ENCODE measurements at regions of chr15 and their contacts with region 1.

Region 1: DNA sequence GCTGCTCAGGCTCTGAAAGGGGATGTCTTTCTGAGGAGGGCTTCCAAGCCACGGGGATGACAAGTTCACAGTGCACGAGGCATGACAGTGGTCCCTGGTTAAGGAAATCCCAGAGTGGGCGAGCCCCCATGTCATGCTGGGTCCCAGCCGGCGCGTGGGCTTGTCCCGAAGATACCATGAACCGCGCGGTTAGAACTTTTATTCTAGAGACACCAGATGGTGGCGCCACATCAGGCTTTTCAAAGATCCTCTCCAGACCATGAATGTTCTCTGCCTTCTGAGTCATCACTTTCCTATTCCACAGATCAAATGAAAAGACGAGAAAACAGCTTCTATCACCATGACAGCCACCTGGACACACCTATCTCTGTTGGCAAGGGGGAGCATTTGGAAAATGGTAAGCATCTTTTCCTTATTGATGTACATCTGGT is 227.8 kb upstream of the LYSMD4 start:
- DNase-seq: peak; percentile 43 to 46
- H3K4me3 ChIP-seq: no peak overlapping the region
- H3K27ac ChIP-seq: no peak overlapping the region
- H3K4me1 ChIP-seq: no peaks in the 10 kb centered on the region; the same call in 1 of the 2 replicates
- H3K27me3 ChIP-seq: no peaks in the 10 kb centered on the region
- CTCF ChIP-seq: peak; percentile 57

Region 2: GRCh38 chr15:99928429-99928981 is 32.5 kb before region 1 on chr15:
- CTCF ChIA-PET with region 1: no interaction called
- POLR2A ChIA-PET with region 1: no interaction called
- intact Hi-C with region 1: no loop called
- DNase-seq: peak; percentile 47 to 83
- H3K4me3 ChIP-seq: peak overlapping the region; percentile 69
- H3K27ac ChIP-seq: peak overlapping the region; percentile 40; the same call in 1 of the 2 replicates
- H3K4me1 ChIP-seq: peaks cover 8% of the 10 kb centered on the region
- H3K27me3 ChIP-seq: peaks cover 13% of the 10 kb centered on the region; the same call in 1 of the 2 replicates
- CTCF ChIP-seq: peak; percentile 68

Region 3: GRCh38 chr15:100131321-100132224 is 170.5 kb after region 1 on chr15:
- CTCF ChIA-PET with region 1: no interaction called
- POLR2A ChIA-PET with region 1: no interaction called
- intact Hi-C with region 1: loop called (anchors 2 kb)
- DNase-seq: peak in 1 of 2 experiments; percentile 45
- H3K4me3 ChIP-seq: peak overlapping the region; percentile 36; the same call in 1 of the 2 replicates
- H3K27ac ChIP-seq: no peak overlapping the region
- H3K4me1 ChIP-seq: no peaks in the 10 kb centered on the region
- H3K27me3 ChIP-seq: no peaks in the 10 kb centered on the region
- CTCF ChIP-seq: peak; percentile 49

Measured in PC-9 (cell line).